ENCODE measurements at regions of chr1 and their contacts with region 1.

Region 1: GRCh38 chr1:203006948-203007871 is at the start of gene TMEM183A:
- DNase-seq: peak; percentile 98
- H3K4me3 Mint-ChIP-seq: peak within 1 kb of the TSS; percentile 86
- H3K27ac Mint-ChIP-seq: peak within 1 kb of the TSS; percentile 97
- H3K4me1 Mint-ChIP-seq: peaks cover 22% of the 10 kb centered on the region
- H3K27me3 Mint-ChIP-seq: no peaks in the 10 kb centered on the region
- total RNA-seq, gene TMEM183A: 77.7 and 82.8 TPM in 2 replicates

Region 2: GRCh38 chr1:202750758-202751157 is 256.5 kb before region 1 on chr1:
- intact Hi-C with region 1: loop called (anchors 10 kb)
- DNase-seq: no peak
- H3K4me3 Mint-ChIP-seq: no peak overlapping the region
- H3K27ac Mint-ChIP-seq: no peak overlapping the region
- H3K4me1 Mint-ChIP-seq: no peaks in the 10 kb centered on the region
- H3K27me3 Mint-ChIP-seq: no peaks in the 10 kb centered on the region

Region 3: GRCh38 chr1:202861420-202862200 is 145.6 kb before region 1 on chr1:
- intact Hi-C with region 1: loop called (anchors 5 kb)
- DNase-seq: peak; percentile 86
- H3K4me3 Mint-ChIP-seq: peak overlapping the region; percentile 87
- H3K27ac Mint-ChIP-seq: no peak overlapping the region
- H3K4me1 Mint-ChIP-seq: peaks cover 13% of the 10 kb centered on the region
- H3K27me3 Mint-ChIP-seq: peaks cover 68% of the 10 kb centered on the region

Region 4: GRCh38 chr1:203026031-203026989 is 19.1 kb after region 1 on chr1 and contains the start of gene PPFIA4:
- intact Hi-C with region 1: loop called (anchors 1 kb)
- DNase-seq: peak; percentile 97
- H3K4me3 Mint-ChIP-seq: peak within 1 kb of the TSS; percentile 92
- H3K27ac Mint-ChIP-seq: peak within 1 kb of the TSS; percentile 80
- H3K4me1 Mint-ChIP-seq: peaks cover 26% of the 10 kb centered on the region
- H3K27me3 Mint-ChIP-seq: peaks cover 2% of the 10 kb centered on the region
- total RNA-seq, gene PPFIA4: 34.2 and 35.1 TPM in 2 replicates

Region 5: DNA sequence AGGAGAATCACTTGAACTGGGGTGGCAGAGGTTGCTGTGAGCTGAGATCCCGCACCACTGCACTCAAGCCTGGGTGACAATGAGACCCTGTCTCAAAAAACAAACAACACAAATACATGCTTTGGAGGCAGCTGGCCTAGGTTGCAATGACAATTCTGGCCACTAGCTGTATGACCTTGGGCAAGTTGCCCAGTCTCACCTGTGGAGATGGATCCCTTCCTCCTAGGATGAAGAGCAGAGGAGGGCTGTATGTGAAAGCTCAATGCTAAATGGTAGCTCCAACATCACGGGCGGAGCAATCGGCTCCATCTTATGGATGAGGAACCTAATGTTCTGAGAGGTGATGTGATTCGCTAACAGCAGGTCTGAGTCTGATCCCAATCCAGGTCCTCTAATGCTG is 140.9 kb after region 1 on chr1:
- intact Hi-C with region 1: no loop called
- DNase-seq: no peak
- H3K4me3 Mint-ChIP-seq: no peak overlapping the region
- H3K27ac Mint-ChIP-seq: no peak overlapping the region
- H3K4me1 Mint-ChIP-seq: no peaks in the 10 kb centered on the region
- H3K27me3 Mint-ChIP-seq: peaks cover 2% of the 10 kb centered on the region